ENCODE measurements at regions of chr9 and their contacts with region 1.

Region 1: GRCh38 chr9:135864447-135865049 is 42.8 kb downstream of the CAMSAP1 start:
- DNase-seq: peak; percentile 51
- H3K4me3 ChIP-seq: no peak overlapping the region
- H3K27ac ChIP-seq: no peak overlapping the region
- H3K4me1 ChIP-seq: no peaks in the 10 kb centered on the region
- H3K27me3 ChIP-seq: no peaks in the 10 kb centered on the region
- CTCF ChIP-seq: peak; percentile 86 to 87
- POLR2A ChIP-seq: no peak

Region 2: DNA sequence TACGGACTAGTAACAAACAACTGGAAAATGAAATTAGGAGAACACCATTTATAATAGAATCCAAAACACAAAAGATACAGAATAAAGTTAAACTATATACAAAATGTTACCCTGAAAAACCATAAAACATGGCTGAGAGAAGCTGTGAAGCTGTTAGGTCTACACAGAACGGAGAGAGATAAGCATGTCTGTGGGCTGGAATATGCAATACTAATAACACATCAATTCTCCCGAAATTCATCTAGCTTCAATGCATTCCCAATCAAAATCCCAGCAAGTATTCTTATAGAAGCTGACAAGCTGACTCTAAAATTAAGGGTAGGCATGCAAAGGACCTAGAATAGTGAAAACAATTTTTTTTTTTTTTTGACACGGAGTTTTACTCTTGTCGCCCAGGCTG is 10.3 kb after region 1 on chr9:
- CTCF ChIA-PET with region 1: interaction called, 10 read pairs
- POLR2A ChIA-PET with region 1: no interaction called
- dilution Hi-C with region 1: no loop called
- intact Hi-C with region 1: no loop called
- DNase-seq: no peak
- H3K4me3 ChIP-seq: no peak overlapping the region
- H3K27ac ChIP-seq: no peak overlapping the region
- H3K4me1 ChIP-seq: no peaks in the 10 kb centered on the region
- H3K27me3 ChIP-seq: no peaks in the 10 kb centered on the region
- CTCF ChIP-seq: no peak
- POLR2A ChIP-seq: no peak

Region 3: DNA sequence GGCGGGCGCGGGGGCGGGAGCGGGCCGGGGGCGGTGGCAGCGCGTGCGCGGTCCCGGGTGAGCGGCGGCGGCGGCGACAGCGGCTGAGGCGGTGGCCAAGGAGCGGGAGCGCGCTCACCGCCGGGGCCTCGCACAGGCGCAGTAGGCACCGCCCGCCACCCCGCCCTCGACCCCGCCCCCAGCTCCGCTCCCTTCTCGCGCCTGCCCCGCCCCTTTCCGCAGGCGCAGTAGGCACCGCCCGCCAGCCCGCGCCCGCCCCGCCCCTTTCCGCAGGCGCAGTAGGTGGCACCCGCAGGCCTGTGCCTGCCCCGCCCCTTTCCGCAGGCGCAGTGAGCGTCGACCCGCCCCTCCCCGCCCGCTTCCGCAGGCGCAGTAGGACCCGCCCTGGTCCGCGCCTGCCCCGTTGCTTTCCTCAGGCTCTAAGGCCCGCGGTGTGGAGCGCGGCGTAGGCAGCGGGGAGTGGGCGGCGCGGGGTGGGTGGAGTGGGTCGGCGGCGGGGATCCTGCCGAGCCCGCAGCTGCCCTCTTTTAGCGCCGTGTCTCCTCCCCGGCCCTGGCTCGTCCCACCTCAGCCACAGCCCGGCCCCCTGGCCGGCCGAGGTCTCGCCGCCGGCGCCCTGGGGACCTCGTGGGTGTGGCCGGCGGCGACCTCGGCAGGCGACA is 43.0 kb after region 1 on chr9 and contains the start of gene CAMSAP1:
- CTCF ChIA-PET with region 1: interaction called, 8 read pairs
- POLR2A ChIA-PET with region 1: no interaction called
- dilution Hi-C with region 1: no loop called
- intact Hi-C with region 1: loop called (anchors 1 kb)
- DNase-seq: peak; percentile 95
- H3K4me3 ChIP-seq: peak within 1 kb of the TSS; percentile 42 to 84 (median 73)
- H3K27ac ChIP-seq: peak within 1 kb of the TSS; percentile 45
- H3K4me1 ChIP-seq: peaks cover 36% of the 10 kb centered on the region
- H3K27me3 ChIP-seq: no peaks in the 10 kb centered on the region
- CTCF ChIP-seq: no peak
- POLR2A ChIP-seq: peak; percentile 45
- total RNA-seq, gene CAMSAP1: 25.5 and 30.6 TPM in 2 replicates